CD4-positive, alpha-beta T cell (primary cell): ENCODE measurements at regions of chr1 and their contacts with region 1.

Region 1: GRCh38 chr1:248714248-248714647 is 11.7 kb upstream of the OR14I1 start:
- DNase-seq: no peak
- ATAC-seq: no peak
- H3K4me3 ChIP-seq: no peak overlapping the region
- H3K4me3 Mint-ChIP-seq: no peak overlapping the region
- H3K27ac ChIP-seq: no peak overlapping the region
- H3K27ac Mint-ChIP-seq: no peak overlapping the region
- H3K4me1 ChIP-seq: no peaks in the 10 kb centered on the region
- H3K4me1 Mint-ChIP-seq: no peaks in the 10 kb centered on the region
- H3K27me3 ChIP-seq: peaks cover 0 to 12% of the 10 kb centered on the region in 2 experiments
- H3K27me3 Mint-ChIP-seq: peaks cover 11% of the 10 kb centered on the region
- CTCF ChIP-seq: no peak

Region 2: GRCh38 chr1:248696261-248696660 is 18.0 kb before region 1 on chr1:
- CTCF ChIA-PET with region 1: no interaction called
- POLR2A ChIA-PET with region 1: no interaction called
- intact Hi-C with region 1: loop called in 1 of 2 experiments (anchors 2 kb)
- DNase-seq: peak in 4 of 14 experiments; percentile 6 to 26 (median 10)
- ATAC-seq: no peak
- H3K4me3 ChIP-seq: no peak overlapping the region
- H3K4me3 Mint-ChIP-seq: no peak overlapping the region
- H3K27ac ChIP-seq: no peak overlapping the region
- H3K27ac Mint-ChIP-seq: no peak overlapping the region
- H3K4me1 ChIP-seq: no peaks in the 10 kb centered on the region
- H3K4me1 Mint-ChIP-seq: no peaks in the 10 kb centered on the region
- H3K27me3 ChIP-seq: no peaks in the 10 kb centered on the region
- H3K27me3 Mint-ChIP-seq: peaks cover 31% of the 10 kb centered on the region
- CTCF ChIP-seq: no peak

Region 3: GRCh38 chr1:248703674-248704073 is 10.6 kb before region 1 on chr1:
- CTCF ChIA-PET with region 1: no interaction called
- POLR2A ChIA-PET with region 1: no interaction called
- intact Hi-C with region 1: loop called (anchors 1 to 2 kb)
- DNase-seq: no peak
- ATAC-seq: no peak
- H3K4me3 ChIP-seq: no peak overlapping the region
- H3K4me3 Mint-ChIP-seq: no peak overlapping the region
- H3K27ac ChIP-seq: no peak overlapping the region
- H3K27ac Mint-ChIP-seq: no peak overlapping the region
- H3K4me1 ChIP-seq: no peaks in the 10 kb centered on the region
- H3K4me1 Mint-ChIP-seq: no peaks in the 10 kb centered on the region
- H3K27me3 ChIP-seq: no peaks in the 10 kb centered on the region
- H3K27me3 Mint-ChIP-seq: peaks cover 18% of the 10 kb centered on the region
- CTCF ChIP-seq: no peak